ENCODE measurements at regions of chr4 and their contacts with region 1.

Region 1: DNA sequence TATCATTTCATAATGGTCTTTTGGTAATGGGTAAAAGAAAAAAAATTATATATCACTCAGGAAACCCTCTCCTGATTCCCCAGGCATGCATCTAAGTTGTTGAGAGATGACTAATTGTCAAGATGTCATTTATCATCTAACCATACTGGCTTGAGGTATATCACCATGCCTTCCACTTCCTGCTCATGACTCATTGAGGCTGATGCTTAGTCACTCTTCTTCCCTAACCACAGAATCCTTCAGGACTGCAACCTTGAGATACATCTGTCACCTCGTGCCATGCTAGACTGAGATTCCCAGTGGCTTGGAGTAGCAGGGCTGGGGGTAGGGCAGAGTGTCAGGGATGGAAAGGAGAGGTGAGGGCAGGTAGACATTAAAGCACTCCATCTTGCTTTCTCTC is 782.5 kb upstream of the INTU start:
- DNase-seq: peak; percentile 99
- ATAC-seq: peak; percentile 96
- H3K4me3 ChIP-seq: no peak overlapping the region
- H3K27ac ChIP-seq: peak overlapping the region; percentile 31; the same call in 1 of the 2 replicates
- H3K4me1 ChIP-seq: 0 out of 2 replicates have a peak, but pooled peaks cover 2% of the 10 kb centered on the region
- H3K27me3 ChIP-seq: no peaks in the 10 kb centered on the region
- CTCF ChIP-seq: no peak
- POLR2A ChIP-seq: no peak
- RAD21 ChIP-seq: 0 out of 2 replicates have a peak, but pooled peaks have one; percentile 6

Region 2: DNA sequence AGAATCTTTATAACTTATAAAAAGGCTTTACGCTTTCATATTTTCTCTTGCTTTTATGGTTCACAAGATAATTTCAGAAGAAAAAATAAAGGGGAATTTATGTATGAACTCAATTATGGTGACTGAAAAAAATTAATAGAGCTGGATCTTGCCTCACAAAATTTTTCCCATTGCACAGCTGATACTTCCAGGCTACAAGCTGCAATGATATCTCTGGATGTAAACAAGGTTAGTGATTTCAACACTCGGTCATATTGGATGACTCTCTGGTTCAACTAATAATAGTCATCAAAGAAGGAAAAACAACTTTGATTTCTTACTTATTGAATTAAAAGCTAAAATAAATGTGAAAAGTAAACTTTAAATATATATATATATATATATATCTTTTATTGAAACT is 667.5 kb before region 1 on chr4:
- CTCF ChIA-PET with region 1: no interaction called
- POLR2A ChIA-PET with region 1: no interaction called
- dilution Hi-C with region 1: no loop called
- in situ Hi-C with region 1: no loop called
- intact Hi-C with region 1: no loop called
- DNase-seq: peak; percentile 48
- ATAC-seq: peak; percentile 63
- H3K4me3 ChIP-seq: no peak overlapping the region
- H3K27ac ChIP-seq: no peak overlapping the region
- H3K4me1 ChIP-seq: no peaks in the 10 kb centered on the region
- H3K27me3 ChIP-seq: no peaks in the 10 kb centered on the region
- CTCF ChIP-seq: no peak
- POLR2A ChIP-seq: no peak
- RAD21 ChIP-seq: no peak

Region 3: GRCh38 chr4:126306152-126306869 is 544.0 kb before region 1 on chr4:
- CTCF ChIA-PET with region 1: no interaction called
- POLR2A ChIA-PET with region 1: no interaction called
- dilution Hi-C with region 1: no loop called
- in situ Hi-C with region 1: no loop called
- intact Hi-C with region 1: no loop called
- DNase-seq: no peak
- ATAC-seq: no peak
- H3K4me3 ChIP-seq: no peak overlapping the region
- H3K27ac ChIP-seq: no peak overlapping the region
- H3K4me1 ChIP-seq: no peaks in the 10 kb centered on the region
- H3K27me3 ChIP-seq: no peaks in the 10 kb centered on the region
- CTCF ChIP-seq: no peak
- POLR2A ChIP-seq: no peak
- RAD21 ChIP-seq: no peak

Region 4: DNA sequence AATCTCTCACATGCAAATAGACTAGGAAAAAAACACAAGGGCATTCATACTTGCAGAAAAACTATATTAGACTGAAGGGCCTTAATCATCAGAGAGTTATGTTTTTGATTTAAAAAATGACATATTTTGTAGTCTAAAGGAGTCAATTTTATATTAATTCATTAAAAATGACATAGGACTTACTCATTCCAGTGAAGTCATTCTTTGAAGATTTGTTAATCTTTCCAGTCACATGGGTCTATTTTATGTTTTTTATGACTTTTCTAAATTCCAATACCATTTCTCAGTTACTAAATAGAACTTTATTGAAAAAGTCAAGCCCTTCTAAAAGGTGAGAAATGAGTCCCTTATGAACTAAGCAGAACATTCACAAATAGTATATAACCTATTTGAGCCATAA is 38.7 kb after region 1 on chr4:
- CTCF ChIA-PET with region 1: no interaction called
- POLR2A ChIA-PET with region 1: no interaction called
- dilution Hi-C with region 1: no loop called
- in situ Hi-C with region 1: no loop called
- intact Hi-C with region 1: loop called (anchors 5 kb)
- DNase-seq: peak; percentile 77
- ATAC-seq: peak; percentile 40
- H3K4me3 ChIP-seq: no peak overlapping the region
- H3K27ac ChIP-seq: no peak overlapping the region; the same call in 1 of the 2 replicates
- H3K4me1 ChIP-seq: peaks cover 6% of the 10 kb centered on the region
- H3K27me3 ChIP-seq: no peaks in the 10 kb centered on the region
- CTCF ChIP-seq: no peak
- POLR2A ChIP-seq: no peak
- RAD21 ChIP-seq: no peak

Measured in IMR-90 (cell line).